Ascending aorta (tissue), 2 donors: ENCODE measurements at regions of chr3 and their contacts with region 1.

Region 1: DNA sequence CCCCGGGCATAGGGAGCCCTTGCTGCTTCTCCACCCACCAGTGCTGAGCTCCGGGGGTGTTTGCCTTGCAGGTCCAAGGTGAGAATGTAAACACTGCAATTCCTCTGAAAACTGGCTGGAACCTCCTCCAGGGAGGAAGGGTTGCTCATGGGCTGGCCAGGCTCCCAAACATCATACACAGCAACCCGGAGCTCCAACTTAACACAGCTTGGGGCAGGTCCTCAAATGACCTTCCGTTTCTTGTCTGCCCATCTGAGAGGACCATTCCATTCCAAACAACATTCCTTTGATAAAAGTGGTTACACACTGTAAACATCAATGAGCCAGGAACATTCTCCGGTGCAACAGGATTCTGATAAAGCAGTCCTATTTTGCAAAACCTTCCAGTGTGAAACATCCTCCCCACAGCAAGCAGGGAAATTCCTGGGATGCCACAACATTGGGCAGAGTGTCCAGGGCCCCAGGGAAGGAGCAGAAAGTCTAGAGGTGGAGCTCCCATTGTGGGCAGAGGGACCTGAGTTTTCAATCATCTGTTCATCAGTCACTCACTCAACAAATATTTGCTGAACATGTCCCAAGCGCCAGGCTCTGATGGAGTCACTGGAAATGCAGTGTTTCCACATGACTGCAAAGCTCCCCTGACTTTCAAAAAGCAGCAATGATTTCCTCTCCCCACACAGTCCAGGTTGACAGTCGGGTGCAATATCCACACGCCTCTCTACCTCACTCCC is 7.3 kb upstream of the HEG1 start:
- DNase-seq: peak in 1 of 2 donors; percentile 83
- H3K4me3 ChIP-seq: no peak overlapping the region
- H3K27ac ChIP-seq: peak overlapping the region; percentile 54 to 76
- H3K4me1 ChIP-seq: peaks cover 10 to 28% of the 10 kb centered on the region in 2 donors
- H3K27me3 ChIP-seq: no peaks in the 10 kb centered on the region
- CTCF ChIP-seq: no peak

Region 2: GRCh38 chr3:125107861-125108567 is 45.0 kb after region 1 on chr3:
- intact Hi-C with region 1: loop called (anchors 5 kb)
- DNase-seq: no peak
- H3K4me3 ChIP-seq: no peak overlapping the region
- H3K27ac ChIP-seq: peak overlapping the region; percentile 69 to 77
- H3K4me1 ChIP-seq: peaks cover 5 to 22% of the 10 kb centered on the region in 2 donors
- H3K27me3 ChIP-seq: no peaks in the 10 kb centered on the region
- CTCF ChIP-seq: no peak